Activated naive CD4-positive, alpha-beta T cell treated with anti-CD3 and anti-CD28 coated beads for 36 hours (primary cell): ENCODE measurements at regions of chr1 and their contacts with region 1.

Region 1: DNA sequence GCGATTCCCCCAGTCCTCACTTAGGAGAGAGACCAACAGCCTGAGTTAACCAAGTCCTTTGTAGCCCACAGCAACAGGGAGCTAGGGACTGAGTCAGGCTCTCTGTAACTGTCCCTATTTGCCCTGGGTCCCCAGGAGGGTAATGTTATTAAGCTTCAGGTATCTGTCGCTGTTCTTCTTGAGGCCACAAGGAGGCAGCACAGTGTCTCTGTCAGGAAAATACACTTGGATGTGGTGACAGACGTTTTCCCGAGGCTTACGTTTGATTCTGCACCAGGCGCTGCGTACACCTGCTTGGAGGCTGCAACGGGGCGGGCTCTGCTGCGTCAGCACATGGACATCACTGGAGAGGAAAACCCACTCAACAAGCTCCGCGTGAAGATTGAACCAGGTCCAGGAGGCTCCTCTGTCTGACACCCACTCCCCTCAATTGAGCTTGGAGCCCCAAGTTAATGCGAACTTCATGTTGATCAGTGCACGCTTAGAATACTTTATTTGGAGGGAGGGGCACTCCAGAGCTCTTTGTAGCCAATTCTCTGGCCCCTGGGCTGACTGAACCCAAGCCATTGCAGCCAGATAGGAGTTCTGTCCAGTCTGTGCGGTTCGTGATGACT is 10.7 kb upstream of the ELF3 start:
- DNase-seq: peak; percentile 53
- H3K4me3 Mint-ChIP-seq: no peak overlapping the region
- H3K27ac Mint-ChIP-seq: no peak overlapping the region
- H3K4me1 Mint-ChIP-seq: no peaks in the 10 kb centered on the region
- H3K27me3 Mint-ChIP-seq: no peaks in the 10 kb centered on the region

Region 2: DNA sequence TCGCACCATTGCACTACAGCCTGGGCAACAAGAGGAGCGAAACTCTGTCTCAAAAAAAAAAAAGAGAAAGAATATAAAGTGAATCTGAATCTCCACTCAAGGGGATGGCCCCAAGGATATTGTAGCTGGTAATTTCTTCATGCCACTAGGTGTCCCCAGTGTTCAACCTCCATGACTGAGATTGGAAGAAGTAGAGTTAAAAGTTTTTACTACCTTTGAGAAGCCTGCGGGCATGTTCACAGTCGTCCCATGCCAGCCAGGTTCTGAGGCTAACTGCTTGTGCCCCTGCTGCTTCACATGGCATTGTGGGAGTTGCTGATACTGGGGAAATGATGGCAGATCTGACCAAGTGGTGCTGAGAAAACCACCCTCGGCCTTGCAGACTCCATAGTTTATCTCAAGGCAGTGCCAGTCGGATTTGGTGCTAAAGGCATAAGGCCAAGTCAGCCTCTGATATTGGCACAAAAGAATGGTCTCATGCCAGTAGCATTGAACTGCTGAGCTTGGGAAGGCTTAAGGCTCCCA is 121.8 kb before region 1 on chr1:
- CTCF ChIA-PET with region 1: interaction called, 11 read pairs
- intact Hi-C with region 1: no loop called
- DNase-seq: peak; percentile 57
- H3K4me3 Mint-ChIP-seq: no peak overlapping the region
- H3K27ac Mint-ChIP-seq: peak overlapping the region; percentile 18
- H3K4me1 Mint-ChIP-seq: no peaks in the 10 kb centered on the region
- H3K27me3 Mint-ChIP-seq: no peaks in the 10 kb centered on the region

Region 3: GRCh38 chr1:201982623-201983379 is 16.9 kb before region 1 on chr1 and contains the start of gene RNPEP:
- CTCF ChIA-PET with region 1: interaction called, 11 read pairs
- intact Hi-C with region 1: no loop called
- DNase-seq: peak; percentile 57
- H3K4me3 Mint-ChIP-seq: peak within 1 kb of the TSS; percentile 92
- H3K27ac Mint-ChIP-seq: peak within 1 kb of the TSS; percentile 69
- H3K4me1 Mint-ChIP-seq: peaks cover 17% of the 10 kb centered on the region
- H3K27me3 Mint-ChIP-seq: no peaks in the 10 kb centered on the region
- total RNA-seq, gene RNPEP: 43.4 to 44.4 TPM

Region 4: GRCh38 chr1:201989354-201990128 is 10.2 kb before region 1 on chr1:
- CTCF ChIA-PET with region 1: interaction called, 11 read pairs
- intact Hi-C with region 1: no loop called
- DNase-seq: no peak
- H3K4me3 Mint-ChIP-seq: no peak overlapping the region
- H3K27ac Mint-ChIP-seq: no peak overlapping the region
- H3K4me1 Mint-ChIP-seq: no peaks in the 10 kb centered on the region
- H3K27me3 Mint-ChIP-seq: no peaks in the 10 kb centered on the region

Region 5: DNA sequence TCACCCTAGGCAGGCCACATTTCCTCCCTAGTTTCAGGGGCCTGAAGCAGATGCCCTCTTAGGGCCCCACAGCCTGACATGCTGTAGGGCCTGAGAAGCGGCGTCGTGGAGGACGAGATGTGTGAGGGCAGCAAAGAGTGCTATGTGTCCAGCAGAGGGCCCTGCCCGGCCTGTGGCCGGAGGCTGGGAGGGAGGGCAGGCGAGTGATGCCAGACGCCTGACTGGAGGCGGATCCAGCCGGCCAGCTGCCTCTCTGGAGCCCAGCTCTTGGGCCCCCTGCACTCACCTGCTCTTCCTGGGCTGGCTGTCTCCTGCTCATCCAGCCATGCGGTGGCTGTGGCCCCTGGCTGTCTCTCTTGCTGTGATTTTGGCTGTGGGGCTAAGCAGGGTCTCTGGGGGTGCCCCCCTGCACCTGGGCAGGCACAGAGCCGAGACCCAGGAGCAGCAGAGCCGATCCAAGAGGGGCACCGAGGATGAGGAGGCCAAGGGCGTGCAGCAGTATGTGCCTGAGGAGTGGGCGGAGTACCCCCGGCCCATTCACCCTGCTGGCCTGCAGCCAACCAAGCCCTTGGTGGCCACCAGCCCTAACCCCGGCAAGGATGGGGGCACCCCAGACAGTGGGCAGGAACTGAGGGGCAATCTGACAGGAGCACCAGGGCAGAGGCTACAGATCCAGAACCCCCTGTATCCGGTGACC is 123.1 kb after region 1 on chr1 and contains the start of gene GPR37L1:
- CTCF ChIA-PET with region 1: interaction called, 12 read pairs
- intact Hi-C with region 1: no loop called
- DNase-seq: no peak
- H3K4me3 Mint-ChIP-seq: no peak within 1 kb of the TSS
- H3K27ac Mint-ChIP-seq: no peak within 1 kb of the TSS
- H3K4me1 Mint-ChIP-seq: no peaks in the 10 kb centered on the region
- H3K27me3 Mint-ChIP-seq: peaks cover 7% of the 10 kb centered on the region
- total RNA-seq, gene GPR37L1: not detected

Region 6: DNA sequence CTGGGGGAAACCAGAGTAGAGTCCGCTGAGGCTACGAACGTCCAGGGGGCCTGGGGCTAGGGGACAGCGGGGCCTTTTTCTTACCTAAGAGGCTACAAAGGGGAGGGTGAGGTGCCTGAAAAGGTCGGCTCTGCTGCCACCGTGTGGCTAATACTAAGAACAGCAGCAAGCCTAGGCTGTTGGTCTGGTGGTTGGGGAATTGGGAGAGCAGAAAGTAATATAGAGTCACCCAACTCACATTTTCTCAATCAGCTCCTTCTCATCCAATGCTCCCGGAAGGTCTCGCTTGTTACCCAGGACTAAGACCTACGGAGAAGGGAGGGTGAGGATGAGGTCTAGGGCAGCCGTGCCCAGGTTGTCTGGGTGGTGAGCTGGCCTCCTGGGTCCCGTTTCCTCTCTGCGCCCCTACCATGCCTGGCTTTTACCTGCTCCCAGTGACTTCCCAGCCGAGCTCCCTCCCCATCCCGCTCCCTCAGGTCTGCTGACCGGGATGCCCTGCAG is 135.5 kb after region 1 on chr1:
- CTCF ChIA-PET with region 1: interaction called, 33 read pairs
- intact Hi-C with region 1: loop called (anchors 2 kb)
- DNase-seq: peak; percentile 61
- H3K4me3 Mint-ChIP-seq: no peak overlapping the region
- H3K27ac Mint-ChIP-seq: no peak overlapping the region
- H3K4me1 Mint-ChIP-seq: no peaks in the 10 kb centered on the region
- H3K27me3 Mint-ChIP-seq: no peaks in the 10 kb centered on the region